ENCODE measurements at regions of chr12 and their contacts with region 1.

Region 1: DNA sequence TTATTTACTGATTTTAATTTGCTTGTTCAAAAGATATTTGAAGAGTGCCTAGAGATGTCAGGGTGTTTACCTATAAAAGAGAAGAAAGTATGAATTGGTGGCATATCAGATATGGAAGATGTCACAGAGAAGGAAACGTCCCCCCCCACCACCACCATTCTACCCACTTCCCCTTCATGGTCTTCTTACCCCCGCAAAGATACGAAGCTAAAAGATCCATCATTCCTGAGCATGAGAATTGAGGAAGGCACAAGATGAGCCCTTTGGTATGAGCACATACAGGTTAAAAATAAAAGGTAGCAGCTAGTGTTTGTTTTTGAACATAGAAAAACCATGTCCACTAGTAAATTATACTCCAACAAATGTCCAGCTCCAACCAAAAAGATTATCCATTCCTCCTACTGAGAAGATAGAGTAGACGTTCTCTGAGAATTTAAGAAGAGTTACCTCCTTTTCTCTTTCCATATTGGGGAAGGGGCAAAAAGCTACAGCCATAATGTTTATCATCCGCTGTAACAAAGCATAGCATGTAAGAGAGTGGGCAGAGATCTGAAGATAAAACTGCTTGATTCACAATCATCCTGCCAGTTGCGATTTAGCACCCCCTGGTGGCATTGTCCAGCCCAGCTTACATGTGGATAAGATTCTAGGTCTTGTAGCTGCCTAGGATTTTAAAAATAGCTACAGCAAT is 29.1 kb downstream of the NFYB start:
- DNase-seq: peak; percentile 86 to 89
- H3K4me3 ChIP-seq: no peak overlapping the region
- H3K27ac ChIP-seq: no peak overlapping the region
- H3K4me1 ChIP-seq: peaks cover 0 to 4% (median 0%) of the 10 kb centered on the region in 4 donors
- H3K27me3 ChIP-seq: no peaks in the 10 kb centered on the region
- CTCF ChIP-seq: peak; percentile 79 to 86

Region 2: GRCh38 chr12:103758310-103759089 is 350.4 kb before region 1 on chr12:
- intact Hi-C with region 1: no loop called
- DNase-seq: no peak
- H3K4me3 ChIP-seq: no peak overlapping the region
- H3K27ac ChIP-seq: no peak overlapping the region
- H3K4me1 ChIP-seq: no peaks in the 10 kb centered on the region
- H3K27me3 ChIP-seq: no peaks in the 10 kb centered on the region
- CTCF ChIP-seq: no peak

Region 3: DNA sequence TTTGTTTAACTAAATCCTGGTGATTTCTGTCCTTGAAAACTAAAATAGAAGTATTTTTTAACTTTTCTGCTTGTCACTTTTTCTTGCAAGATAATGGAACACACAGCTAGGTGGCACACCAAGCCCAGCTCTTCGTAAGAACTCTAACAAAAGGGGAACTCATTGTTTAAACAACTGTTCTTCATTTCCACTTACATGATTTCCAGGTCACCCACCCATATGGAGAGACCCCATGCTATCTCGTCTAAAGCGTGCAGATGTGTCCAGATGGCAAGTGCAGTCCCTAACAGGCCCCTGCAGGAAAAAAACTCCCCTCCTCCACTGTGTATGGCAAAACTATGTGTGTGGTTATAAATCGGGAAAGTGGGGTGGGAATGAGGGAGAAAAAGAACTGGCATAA is 224.6 kb before region 1 on chr12:
- intact Hi-C with region 1: loop called (anchors 5 kb)
- DNase-seq: no peak
- H3K4me3 ChIP-seq: no peak overlapping the region
- H3K27ac ChIP-seq: no peak overlapping the region
- H3K4me1 ChIP-seq: no peaks in the 10 kb centered on the region
- H3K27me3 ChIP-seq: no peaks in the 10 kb centered on the region
- CTCF ChIP-seq: peak; percentile 45 to 50

Region 4: DNA sequence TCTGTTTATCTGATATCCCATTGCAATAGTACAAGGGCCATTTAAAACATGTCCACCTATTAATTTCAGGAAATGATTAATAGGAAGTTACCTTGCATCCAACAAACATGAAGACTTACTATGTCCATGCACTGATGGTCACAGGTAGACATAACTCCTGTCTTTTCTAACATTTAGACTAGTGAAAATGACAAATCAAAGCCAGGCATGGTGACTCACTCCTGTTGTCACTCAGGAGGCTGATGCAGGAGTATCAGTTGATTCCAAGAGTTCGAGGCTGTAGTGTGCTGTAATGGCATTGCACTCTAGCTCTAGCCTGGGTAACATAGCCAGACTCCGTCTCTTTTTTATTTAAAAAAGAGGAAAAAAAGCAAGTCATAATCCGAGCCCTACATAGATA is 163.9 kb before region 1 on chr12:
- intact Hi-C with region 1: loop called (anchors 5 kb)
- DNase-seq: no peak
- H3K4me3 ChIP-seq: no peak overlapping the region
- H3K27ac ChIP-seq: no peak overlapping the region
- H3K4me1 ChIP-seq: no peaks in the 10 kb centered on the region
- H3K27me3 ChIP-seq: no peaks in the 10 kb centered on the region
- CTCF ChIP-seq: no peak

Region 5: DNA sequence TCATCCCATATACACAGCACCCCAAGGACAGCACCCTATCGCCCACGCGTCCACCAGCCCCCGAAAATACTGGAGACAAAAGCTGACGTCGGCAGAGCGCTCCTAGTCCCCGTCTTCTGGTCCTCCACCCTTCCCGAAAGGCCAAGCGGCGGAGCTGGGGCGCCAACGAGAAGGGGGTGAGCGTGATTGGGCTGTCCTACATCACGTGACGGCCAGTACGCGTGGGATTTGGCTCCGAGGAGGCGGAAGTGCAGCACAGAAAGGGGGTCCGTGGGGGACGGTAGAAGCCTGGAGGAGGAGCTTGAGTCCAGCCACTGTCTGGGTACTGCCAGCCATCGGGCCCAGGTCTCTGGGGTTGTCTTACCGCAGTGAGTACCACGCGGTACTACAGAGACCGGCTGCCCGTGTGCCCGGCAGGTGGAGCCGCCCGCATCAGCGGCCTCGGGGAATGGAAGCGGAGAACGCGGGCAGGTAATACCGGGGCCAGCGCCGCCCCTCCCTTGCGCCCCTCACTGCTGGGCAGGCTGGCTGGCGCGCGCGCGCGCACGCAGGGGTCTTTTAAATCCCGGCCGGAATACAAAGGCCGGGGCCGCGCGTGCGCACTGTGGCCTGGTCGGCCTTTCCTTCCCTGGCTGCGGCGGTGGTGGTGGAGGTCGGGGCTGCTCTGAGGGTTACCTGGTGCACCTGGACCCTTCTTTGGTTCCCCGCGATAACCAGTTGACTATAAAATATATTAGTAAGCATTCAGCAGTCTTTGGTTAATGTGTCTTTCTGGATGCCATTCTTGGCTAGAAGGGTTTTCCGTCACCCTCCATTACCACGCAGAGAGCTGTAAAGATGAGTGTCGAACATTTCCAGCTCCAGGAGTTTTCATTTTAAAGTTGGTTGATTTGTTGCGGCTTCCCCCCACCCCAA is 143.1 kb before region 1 on chr12 and contains the start of gene TDG:
- intact Hi-C with region 1: loop called (anchors 10 kb)
- DNase-seq: peak; percentile 99
- H3K4me3 ChIP-seq: peak within 1 kb of the TSS; percentile 94 to 96
- H3K27ac ChIP-seq: peak within 1 kb of the TSS; percentile 97 to 98
- H3K4me1 ChIP-seq: peaks cover 0 to 56% (median 40%) of the 10 kb centered on the region in 4 donors
- H3K27me3 ChIP-seq: no peaks in the 10 kb centered on the region
- CTCF ChIP-seq: peak in 1 of 2 experiments; percentile 9

Region 6: DNA sequence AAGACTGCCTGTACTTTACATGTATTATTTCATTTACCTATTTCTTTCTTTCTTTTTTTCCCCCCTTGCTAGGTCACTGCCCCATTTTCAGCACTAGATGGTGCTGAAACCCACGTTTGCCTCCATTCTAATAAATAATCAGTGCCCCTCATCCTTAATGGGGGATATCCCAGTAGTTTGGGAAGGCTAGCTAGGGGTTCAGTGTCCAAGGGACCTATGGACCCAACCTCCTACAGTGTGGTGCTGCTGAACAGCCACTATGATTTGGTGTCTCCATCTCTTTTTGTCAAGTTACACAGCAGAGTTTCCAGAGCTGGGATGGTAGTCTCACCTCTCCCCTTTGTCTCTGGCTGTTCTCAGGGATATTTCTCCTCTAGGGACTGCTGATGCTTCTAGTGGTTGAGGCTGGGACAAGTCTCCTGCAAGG is 51.1 kb before region 1 on chr12:
- intact Hi-C with region 1: loop called (anchors 5 kb)
- DNase-seq: no peak
- H3K4me3 ChIP-seq: no peak overlapping the region
- H3K27ac ChIP-seq: no peak overlapping the region
- H3K4me1 ChIP-seq: peaks cover 0 to 5% (median 0%) of the 10 kb centered on the region in 4 donors
- H3K27me3 ChIP-seq: no peaks in the 10 kb centered on the region
- CTCF ChIP-seq: peak; percentile 47 to 56

Region 7: DNA sequence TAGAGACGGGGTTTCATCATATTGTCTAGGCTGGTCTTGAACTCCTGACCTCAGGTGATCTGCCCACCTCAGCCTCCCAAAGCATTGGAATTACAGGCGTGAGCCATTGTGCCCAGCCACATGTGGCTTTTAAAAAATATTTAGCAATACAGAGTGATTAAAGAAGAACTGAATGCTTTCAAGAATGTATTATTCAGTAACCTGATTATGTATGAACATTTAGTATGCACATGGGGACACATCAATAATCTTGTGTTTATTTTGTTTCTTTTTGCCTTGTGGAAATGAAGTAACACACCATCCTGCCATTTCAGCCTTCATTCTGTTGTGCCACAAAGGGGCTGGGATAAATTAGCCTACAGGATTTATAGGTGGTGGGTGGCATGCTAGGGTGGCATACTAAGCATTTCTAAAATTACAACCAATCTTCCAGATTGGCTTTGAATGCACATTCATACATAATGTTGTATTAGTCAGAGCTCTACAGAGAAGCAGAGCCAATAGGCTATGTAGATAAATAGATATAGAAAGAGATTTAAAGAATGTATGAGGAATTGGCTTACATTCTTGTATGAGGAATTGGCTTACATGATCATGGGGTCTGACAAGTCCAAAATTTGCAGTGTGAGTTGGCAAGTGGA is 81.1 kb after region 1 on chr12:
- intact Hi-C with region 1: no loop called
- DNase-seq: no peak
- H3K4me3 ChIP-seq: no peak overlapping the region
- H3K27ac ChIP-seq: no peak overlapping the region
- H3K4me1 ChIP-seq: peaks cover 0 to 5% (median 0%) of the 10 kb centered on the region in 4 donors
- H3K27me3 ChIP-seq: no peaks in the 10 kb centered on the region
- CTCF ChIP-seq: no peak

Region 8: DNA sequence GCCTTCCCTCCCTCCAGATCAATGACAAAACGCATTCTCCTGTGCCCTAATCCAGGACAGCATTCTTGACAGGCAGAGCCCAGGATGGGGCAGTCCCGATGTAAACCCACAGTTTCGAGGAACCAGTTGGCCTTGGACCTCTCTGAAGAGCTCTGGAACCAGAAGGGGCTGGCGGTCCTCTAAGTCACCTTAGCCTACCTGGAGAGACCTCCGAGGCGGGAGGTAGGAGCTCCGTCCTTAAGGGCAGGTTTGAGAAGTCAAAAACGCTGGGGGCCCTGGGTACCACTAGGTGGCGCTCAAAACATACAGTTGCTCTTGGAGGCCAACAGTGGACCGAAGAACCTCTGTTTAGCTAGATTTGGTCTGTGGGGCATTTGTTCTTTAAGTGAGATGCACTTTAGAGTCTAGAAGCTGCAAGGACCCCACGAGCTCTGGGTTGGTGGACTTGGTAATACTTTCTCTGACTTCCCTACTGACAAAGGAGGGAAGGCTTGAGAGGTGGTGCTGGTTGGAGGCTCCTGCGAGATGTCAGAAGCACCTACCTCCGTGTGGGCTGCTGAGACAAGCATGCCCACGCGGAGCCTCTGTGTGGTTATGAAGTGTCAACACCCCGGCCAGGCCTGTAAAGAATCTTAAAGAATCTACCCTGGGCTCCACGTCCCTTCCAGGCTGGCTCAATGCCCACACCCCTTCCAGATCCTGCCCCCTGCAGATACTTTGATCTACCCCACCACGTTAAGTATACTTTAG is 273.0 kb after region 1 on chr12:
- intact Hi-C with region 1: no loop called
- DNase-seq: peak; percentile 76 to 85
- H3K4me3 ChIP-seq: peak overlapping the region in 1 of 2 donors; percentile 11
- H3K27ac ChIP-seq: no peak overlapping the region
- H3K4me1 ChIP-seq: peaks cover 0 to 9% (median 4%) of the 10 kb centered on the region in 4 donors
- H3K27me3 ChIP-seq: no peaks in the 10 kb centered on the region
- CTCF ChIP-seq: peak; percentile 91 to 97

Measured in tibial artery (tissue), 4 donors.